Activated T-helper 2 cell treated with anti-CD3 and anti-CD28 coated beads, Interferon-gamma antibody, Interleukin-2, Interleukin-4, amounts not matched to agents 10 μg/mL and 5 μg/mL and 100 μg/mL, durations not matched to agents 14 hours and 24 hours and 36 hours (primary cell): ENCODE measurements at regions of chr4 and their contacts with region 1.

Region 1: DNA sequence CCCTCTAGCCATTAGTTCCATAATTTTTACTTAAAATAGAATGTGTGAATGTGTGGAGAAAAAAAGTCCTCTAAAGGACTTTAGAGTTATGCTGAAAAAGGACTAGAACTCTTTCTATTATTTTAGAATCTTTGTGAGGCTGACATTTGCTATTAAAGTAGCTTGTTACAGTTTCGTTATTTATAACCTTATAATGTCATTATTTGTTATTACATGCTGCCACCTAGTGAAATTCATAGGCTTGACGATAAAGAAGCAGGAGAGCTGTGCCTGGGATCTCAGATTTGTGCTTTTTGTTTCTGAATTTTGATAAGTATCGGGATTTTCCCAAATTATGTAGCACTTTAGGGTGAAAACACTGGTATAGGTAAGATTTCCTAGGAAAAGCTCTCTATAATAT is 38.5 kb upstream of the TAPT1 start:
- DNase-seq: no peak
- H3K4me3 Mint-ChIP-seq: no peak overlapping the region
- H3K27ac Mint-ChIP-seq: no peak overlapping the region
- H3K4me1 Mint-ChIP-seq: peaks cover 7% of the 10 kb centered on the region
- H3K27me3 Mint-ChIP-seq: no peaks in the 10 kb centered on the region

Region 2: GRCh38 chr4:15756361-15756861 is 508.4 kb before region 1 on chr4:
- intact Hi-C with region 1: no loop called
- DNase-seq: peak; percentile 76
- H3K4me3 Mint-ChIP-seq: peak overlapping the region; percentile 80
- H3K27ac Mint-ChIP-seq: peak overlapping the region; percentile 96
- H3K4me1 Mint-ChIP-seq: peaks cover 54% of the 10 kb centered on the region
- H3K27me3 Mint-ChIP-seq: no peaks in the 10 kb centered on the region

Region 3: GRCh38 chr4:15882675-15883086 is 382.1 kb before region 1 on chr4:
- intact Hi-C with region 1: loop called (anchors 10 kb)
- DNase-seq: peak; percentile 30
- H3K4me3 Mint-ChIP-seq: no peak overlapping the region
- H3K27ac Mint-ChIP-seq: no peak overlapping the region
- H3K4me1 Mint-ChIP-seq: peaks cover 1% of the 10 kb centered on the region
- H3K27me3 Mint-ChIP-seq: peaks cover 26% of the 10 kb centered on the region

Region 4: DNA sequence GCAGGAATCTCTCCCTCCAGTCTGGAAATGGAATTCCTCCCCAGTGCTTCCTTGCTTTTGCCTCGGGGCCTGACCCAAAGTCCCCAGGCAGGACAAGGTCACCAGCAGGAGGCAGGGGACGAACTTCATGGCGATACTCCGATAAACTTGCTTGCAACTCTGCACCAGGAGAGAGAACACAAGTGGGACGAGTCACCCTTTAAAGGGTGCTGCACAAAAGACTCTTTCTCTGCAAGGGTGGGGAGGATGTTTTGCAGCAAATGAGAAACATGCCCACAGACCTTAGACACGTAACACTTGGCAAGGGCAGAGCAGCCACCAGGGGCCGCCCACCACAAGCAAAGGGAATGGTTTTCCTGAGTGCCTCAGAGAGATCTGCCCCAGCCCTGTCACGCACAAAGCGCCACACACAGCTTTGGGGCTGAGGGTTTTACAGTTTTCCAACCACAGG is 301.8 kb before region 1 on chr4 and contains the start of gene FGFBP2:
- intact Hi-C with region 1: loop called (anchors 5 kb)
- DNase-seq: peak; percentile 41
- H3K4me3 Mint-ChIP-seq: no peak within 1 kb of the TSS
- H3K27ac Mint-ChIP-seq: no peak within 1 kb of the TSS
- H3K4me1 Mint-ChIP-seq: peaks cover 15% of the 10 kb centered on the region
- H3K27me3 Mint-ChIP-seq: peaks cover 20% of the 10 kb centered on the region
- total RNA-seq, gene FGFBP2: 2.4 and 3.9 TPM in 2 replicates

Region 5: GRCh38 chr4:16026160-16026761 is 238.5 kb before region 1 on chr4:
- intact Hi-C with region 1: loop called (anchors 1 kb)
- DNase-seq: no peak
- H3K4me3 Mint-ChIP-seq: no peak overlapping the region
- H3K27ac Mint-ChIP-seq: no peak overlapping the region
- H3K4me1 Mint-ChIP-seq: peaks cover 16% of the 10 kb centered on the region
- H3K27me3 Mint-ChIP-seq: peaks cover 13% of the 10 kb centered on the region

Region 6: DNA sequence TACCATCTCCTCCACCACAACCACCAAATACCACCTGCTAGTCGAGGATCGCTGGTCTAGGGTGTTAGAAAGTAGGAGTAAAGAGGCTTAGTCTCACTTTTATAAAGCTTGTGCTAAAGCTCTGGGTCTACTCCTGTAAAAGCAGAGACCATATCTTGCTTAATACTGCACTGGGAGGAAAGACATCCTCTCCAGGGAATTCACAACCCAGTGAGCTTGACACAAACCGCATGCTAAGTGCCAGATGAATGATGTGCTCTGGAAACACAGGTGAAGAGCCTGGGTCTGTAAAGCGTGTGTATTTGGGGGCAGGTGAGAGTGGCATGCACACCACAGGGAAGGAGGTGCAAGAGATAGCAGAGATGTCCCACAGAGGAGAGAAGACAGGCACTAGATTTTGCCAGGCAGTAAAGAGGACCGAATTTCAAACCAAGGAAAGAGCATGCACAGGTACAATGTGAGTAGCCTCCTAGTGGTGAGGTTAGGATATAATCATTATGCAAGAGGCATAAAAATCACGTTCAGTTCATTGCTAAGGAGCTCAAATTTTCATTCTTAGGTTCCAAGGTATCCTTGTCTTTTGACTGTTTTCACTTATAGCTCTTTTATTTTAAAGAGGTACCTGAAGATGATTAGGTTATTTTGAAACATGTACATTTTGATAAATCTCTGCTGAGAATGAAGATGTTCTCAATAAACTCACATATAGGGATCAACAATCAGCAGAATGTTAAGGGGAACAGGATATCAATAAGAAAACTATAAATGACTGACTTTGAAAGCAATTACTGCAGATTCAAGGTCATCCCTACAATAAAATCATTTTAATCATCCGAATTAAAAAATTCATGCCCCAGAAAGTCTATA is 59.3 kb before region 1 on chr4:
- intact Hi-C with region 1: loop called (anchors 2 kb)
- DNase-seq: no peak
- H3K4me3 Mint-ChIP-seq: no peak overlapping the region
- H3K27ac Mint-ChIP-seq: no peak overlapping the region
- H3K4me1 Mint-ChIP-seq: peaks cover 34% of the 10 kb centered on the region
- H3K27me3 Mint-ChIP-seq: no peaks in the 10 kb centered on the region

Region 7: GRCh38 chr4:16225863-16226815 is 38.7 kb before region 1 on chr4 and contains the start of gene TAPT1:
- intact Hi-C with region 1: loop called (anchors 5 kb)
- DNase-seq: peak; percentile 74
- H3K4me3 Mint-ChIP-seq: peak within 1 kb of the TSS; percentile 95
- H3K27ac Mint-ChIP-seq: peak within 1 kb of the TSS; percentile 98
- H3K4me1 Mint-ChIP-seq: peaks cover 48% of the 10 kb centered on the region
- H3K27me3 Mint-ChIP-seq: no peaks in the 10 kb centered on the region
- total RNA-seq, gene TAPT1: 28.1 and 32.9 TPM in 2 replicates

Region 8: DNA sequence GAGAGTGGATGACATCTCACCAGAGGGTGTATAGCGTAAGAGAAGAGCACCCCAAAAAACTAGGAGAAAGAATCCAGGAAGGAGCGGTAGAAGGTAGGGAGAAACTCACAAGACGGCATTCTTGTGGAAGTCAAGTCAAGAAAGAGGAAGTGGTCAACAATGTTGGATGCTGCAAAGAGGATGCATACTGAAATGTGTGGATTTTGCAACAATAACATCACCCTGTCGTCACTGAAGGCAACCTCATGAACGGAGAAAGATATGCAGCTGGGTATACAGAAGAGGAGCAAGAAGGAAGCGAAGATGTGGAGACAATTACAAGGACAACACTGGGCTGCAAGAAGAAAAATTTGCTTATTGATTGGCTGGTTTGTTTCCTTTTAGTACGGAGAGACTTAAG is 27.1 kb before region 1 on chr4:
- intact Hi-C with region 1: loop called (anchors 1 kb)
- DNase-seq: no peak
- H3K4me3 Mint-ChIP-seq: no peak overlapping the region
- H3K27ac Mint-ChIP-seq: no peak overlapping the region
- H3K4me1 Mint-ChIP-seq: no peaks in the 10 kb centered on the region
- H3K27me3 Mint-ChIP-seq: peaks cover 8% of the 10 kb centered on the region

Region 9: DNA sequence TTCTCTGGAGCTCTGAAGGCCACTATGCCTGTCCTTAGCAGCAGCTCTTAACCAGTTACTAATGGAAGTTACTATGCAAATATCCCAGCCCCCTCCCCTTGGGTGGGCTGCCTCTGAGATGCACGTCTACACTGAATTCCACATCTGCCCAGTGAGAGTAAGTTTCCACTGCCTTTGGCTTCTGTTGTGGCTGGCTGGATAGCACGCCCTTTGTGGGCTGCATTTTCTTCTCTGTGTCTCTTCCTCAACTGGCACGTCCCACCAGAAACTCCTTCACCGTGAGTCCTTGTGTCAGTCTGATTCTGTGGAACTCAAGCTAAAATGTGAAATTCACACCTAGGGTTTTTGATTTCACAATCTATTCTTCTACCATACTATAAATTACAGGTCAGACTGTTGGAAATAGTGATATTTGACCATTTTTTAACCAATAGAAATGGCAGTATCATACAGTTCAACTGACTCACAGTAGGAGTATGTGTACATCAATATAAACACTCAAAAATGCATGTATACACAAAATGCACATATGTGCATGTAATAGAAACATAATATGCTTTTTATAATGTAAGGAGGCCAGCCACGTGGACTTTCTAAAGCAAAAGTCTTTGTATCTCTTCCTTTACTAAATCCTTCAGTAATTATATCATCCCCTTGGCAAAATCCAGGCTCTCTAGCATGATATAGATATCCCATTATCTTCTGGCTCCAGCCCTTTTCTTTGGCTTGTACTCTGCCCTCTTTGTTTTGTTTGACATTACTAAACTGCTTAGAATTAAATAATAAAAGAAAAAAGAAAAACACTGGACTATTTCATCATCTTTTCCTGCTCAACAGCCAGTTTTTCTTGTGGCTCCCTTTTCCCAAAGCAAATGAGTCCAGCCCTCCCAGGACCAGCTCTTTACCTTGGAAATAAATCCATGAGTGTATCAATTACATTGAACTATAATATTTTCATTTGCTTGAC is 666.8 kb after region 1 on chr4:
- intact Hi-C with region 1: no loop called
- DNase-seq: no peak
- H3K4me3 Mint-ChIP-seq: no peak overlapping the region
- H3K27ac Mint-ChIP-seq: no peak overlapping the region
- H3K4me1 Mint-ChIP-seq: no peaks in the 10 kb centered on the region
- H3K27me3 Mint-ChIP-seq: no peaks in the 10 kb centered on the region